Heart right ventricle (tissue), 16 donors: ENCODE measurements at regions of chr4 and their contacts with region 1.

Region 1: DNA sequence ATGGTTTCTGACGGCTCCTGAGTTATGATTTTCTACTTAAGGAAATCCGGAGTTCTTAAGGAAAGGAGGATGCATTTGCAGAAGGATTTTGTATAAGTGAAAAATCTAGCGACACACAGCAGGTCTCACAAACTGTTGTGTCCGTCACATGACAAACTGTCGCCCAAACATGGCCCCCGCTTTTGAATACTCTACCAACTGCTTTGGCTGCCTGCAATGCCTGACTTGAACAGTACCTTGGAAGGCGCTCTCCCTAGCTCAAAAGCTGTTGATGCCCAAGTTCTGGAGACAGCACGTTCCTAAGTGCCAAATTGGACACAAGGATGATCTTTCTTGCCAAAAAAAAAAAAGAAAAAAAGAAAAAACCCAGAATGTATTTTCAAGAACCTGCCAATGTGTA is 103.2 kb downstream of the ENPP6 start:
- DNase-seq: no peak
- ATAC-seq: no peak
- H3K4me3 ChIP-seq: no peak overlapping the region
- H3K27ac ChIP-seq: no peak overlapping the region
- H3K4me1 ChIP-seq: no peaks in the 10 kb centered on the region
- H3K27me3 ChIP-seq: peaks cover 0 to 4% (median 0%) of the 10 kb centered on the region in 7 donors
- CTCF ChIP-seq: no peak

Region 2: DNA sequence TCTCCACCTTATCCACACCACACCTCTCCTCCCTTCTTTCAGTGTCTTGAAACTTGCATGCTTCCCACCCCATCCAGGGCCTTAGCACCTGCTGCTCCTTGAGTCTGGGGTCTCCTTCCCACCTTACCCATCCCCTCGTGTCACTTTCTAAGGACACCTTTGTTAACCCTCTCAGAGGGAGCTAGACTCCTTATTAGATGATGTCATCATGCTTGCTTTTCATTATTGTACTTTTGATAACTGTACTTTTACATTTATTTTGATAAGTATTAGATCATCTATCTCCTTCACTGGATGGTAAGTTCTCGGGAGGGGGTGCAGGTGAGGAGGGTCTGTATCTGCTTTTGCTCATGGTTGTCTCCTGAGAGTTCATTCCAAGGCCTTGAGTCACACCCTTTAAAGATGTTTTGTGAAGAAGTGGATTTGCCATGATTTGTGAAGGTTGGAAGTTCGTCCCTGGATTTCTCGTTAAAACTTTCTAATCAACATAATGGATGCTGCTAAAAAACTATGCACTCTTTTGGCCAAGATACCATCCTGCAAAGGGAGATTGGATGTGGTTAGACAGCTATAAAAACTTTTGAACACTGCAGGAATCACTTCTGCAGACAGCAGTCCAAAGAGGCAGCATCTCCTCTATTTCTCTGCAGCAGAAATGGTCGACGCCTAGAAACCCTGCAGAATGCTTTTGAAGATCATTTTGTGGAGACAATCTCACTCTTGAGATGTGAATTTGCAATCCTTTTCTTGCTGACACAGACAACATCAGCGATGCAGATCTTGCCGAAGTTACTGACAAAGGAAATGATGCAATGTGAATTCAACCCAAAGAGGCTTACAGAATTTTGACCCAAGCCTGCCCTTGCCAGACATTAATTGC is 33.7 kb after region 1 on chr4:
- intact Hi-C with region 1: loop called in 1 of 10 experiments (anchors 5 kb)
- DNase-seq: no peak
- ATAC-seq: no peak
- H3K4me3 ChIP-seq: no peak overlapping the region
- H3K27ac ChIP-seq: no peak overlapping the region
- H3K4me1 ChIP-seq: peaks cover 0 to 16% (median 4%) of the 10 kb centered on the region in 9 donors
- H3K27me3 ChIP-seq: no peaks in the 10 kb centered on the region
- CTCF ChIP-seq: no peak